ENCODE measurements at regions of chr22 and their contacts with region 1.

Region 1: DNA sequence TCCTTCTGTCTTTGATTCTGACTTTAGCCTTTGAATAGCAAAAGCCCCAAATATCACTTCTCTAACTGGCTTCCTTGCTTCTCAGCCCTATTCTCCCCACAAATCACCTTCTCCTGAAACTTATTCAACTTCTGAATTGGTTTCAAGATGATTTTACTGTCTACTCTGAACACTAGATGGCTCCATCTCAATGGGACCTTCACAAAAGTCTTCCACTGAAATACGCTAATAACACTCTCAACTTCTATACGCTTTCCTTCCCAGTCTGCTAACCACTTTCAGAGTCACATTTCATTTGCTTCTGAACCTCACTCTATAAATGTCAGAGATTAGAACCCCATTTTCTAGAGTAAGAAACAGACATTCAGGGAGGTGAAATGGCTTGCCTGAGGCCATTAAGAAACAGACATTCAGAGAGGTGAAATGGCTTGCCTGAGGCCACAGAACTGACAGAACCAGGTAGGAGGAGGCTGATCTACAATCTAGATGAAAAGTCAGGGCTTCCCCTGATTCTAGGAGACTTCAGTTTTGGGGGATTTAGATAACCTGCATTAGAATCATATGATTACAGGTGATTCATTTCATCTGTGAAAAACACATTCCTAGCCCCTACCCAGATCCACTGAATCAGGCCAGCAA is 20.6 kb downstream of the MORC2 start:
- DNase-seq: no peak
- H3K4me3 ChIP-seq: no peak overlapping the region
- H3K27ac ChIP-seq: peak overlapping the region; percentile 50 to 62
- H3K4me1 ChIP-seq: no peaks in the 10 kb centered on the region
- H3K27me3 ChIP-seq: no peaks in the 10 kb centered on the region
- CTCF ChIP-seq: peak in 3 of 4 experiments; percentile 49 to 79 (median 72)
- POLR2A ChIP-seq: no peak

Region 2: DNA sequence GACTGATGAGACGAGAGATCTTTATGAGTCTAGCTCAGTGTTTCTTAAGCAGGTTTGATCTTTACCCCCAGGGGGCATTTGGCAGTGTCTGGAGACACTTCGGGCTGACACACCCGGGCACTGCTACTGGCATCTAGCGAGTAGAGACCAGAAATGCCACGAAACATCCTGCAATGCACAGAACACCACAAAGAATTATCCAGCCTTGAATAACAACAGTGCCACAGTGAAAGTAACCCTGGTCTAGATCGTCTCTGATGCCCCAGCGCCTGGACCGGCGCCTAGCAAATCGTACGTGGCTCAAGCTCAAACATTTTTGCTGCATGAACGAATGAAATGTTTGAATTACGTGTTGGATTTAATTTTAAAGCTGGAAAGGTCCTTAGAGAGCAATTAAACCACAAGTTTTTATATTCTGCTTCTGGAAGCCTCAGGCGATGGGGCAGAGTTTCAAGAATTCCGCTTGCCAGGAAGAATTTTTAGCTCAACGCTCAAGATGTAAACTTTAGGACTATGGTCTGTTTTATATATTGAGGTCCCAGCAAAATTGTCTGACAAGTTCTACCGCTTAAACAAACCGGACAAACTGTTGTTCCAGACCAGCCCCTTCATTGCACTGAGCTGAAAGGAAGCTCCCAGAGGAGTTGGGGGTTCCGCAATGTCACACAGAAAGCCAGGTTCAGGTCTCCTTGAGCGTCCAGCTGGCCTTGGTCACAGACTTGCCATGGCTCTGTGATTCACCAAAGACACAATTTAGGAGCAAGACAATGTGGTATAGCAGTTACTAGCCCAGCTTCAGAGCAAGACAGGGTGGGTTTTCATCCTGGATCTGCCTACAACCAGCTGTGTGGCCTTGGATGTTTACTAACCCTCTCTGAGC is 89.0 kb after region 1 on chr22:
- intact Hi-C with region 1: loop called (anchors 10 kb)
- DNase-seq: no peak
- H3K4me3 ChIP-seq: peak overlapping the region in 1 of 2 donors; percentile 8
- H3K27ac ChIP-seq: peak overlapping the region; percentile 48 to 54
- H3K4me1 ChIP-seq: peaks cover 6% of the 10 kb centered on the region
- H3K27me3 ChIP-seq: no peaks in the 10 kb centered on the region
- CTCF ChIP-seq: no peak
- POLR2A ChIP-seq: no peak

Region 3: GRCh38 chr22:31080848-31081649 is 133.1 kb after region 1 on chr22 and contains the start of gene SMTN:
- intact Hi-C with region 1: loop called (anchors 2 kb)
- DNase-seq: peak; percentile 94
- H3K4me3 ChIP-seq: peak within 1 kb of the TSS; percentile 61 to 69
- H3K27ac ChIP-seq: peak within 1 kb of the TSS; percentile 90
- H3K4me1 ChIP-seq: peaks cover 11% of the 10 kb centered on the region
- H3K27me3 ChIP-seq: no peaks in the 10 kb centered on the region
- CTCF ChIP-seq: peak in 2 of 4 experiments; percentile 20 to 26
- POLR2A ChIP-seq: peak; percentile 100
- total RNA-seq, gene SMTN: 200 to 209 TPM

Region 4: GRCh38 chr22:31148953-31149627 is 201.2 kb after region 1 on chr22:
- intact Hi-C with region 1: loop called (anchors 5 kb)
- DNase-seq: peak; percentile 78
- H3K4me3 ChIP-seq: no peak overlapping the region
- H3K27ac ChIP-seq: peak overlapping the region; percentile 43 to 54
- H3K4me1 ChIP-seq: no peaks in the 10 kb centered on the region
- H3K27me3 ChIP-seq: no peaks in the 10 kb centered on the region
- CTCF ChIP-seq: peak; percentile 68 to 96 (median 87)
- POLR2A ChIP-seq: no peak

Region 5: DNA sequence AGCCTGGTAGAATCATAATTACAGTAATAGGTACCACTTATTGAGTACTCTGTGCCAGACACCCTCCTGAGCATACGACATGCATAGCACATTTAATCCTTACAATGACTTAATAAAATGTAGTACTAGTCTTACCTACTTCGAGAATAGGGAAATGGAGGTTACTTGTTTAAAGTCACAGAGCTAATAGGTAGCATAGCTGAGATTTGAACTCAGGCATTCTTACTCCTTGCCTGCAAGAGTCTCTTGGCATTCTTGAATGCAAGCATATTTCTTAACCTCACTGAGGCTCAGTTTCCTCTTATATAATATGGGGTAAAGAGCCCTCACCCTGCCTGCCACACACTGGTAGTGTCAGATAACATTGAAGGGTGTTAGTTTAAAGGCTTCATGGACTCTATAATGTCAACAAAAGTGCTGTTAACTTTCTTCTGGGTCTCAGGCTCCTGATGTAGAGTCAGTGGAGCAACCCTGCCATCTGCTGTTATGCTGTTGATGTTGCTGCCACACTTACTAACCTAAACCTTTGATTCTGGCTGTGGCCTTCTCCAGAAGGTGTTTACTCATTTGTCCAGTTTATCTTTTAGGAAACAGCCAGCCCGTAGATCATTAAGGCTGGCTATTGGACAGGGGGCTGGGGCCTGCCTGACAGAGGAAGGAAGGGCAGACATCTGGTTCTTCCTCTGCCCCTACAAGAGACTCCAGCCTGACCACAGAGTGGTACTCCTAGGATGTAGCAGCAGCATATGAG is 283.1 kb after region 1 on chr22:
- intact Hi-C with region 1: loop called (anchors 10 kb)
- DNase-seq: peak; percentile 74
- H3K4me3 ChIP-seq: no peak overlapping the region
- H3K27ac ChIP-seq: peak overlapping the region; percentile 63 to 67
- H3K4me1 ChIP-seq: peaks cover 6% of the 10 kb centered on the region
- H3K27me3 ChIP-seq: no peaks in the 10 kb centered on the region
- CTCF ChIP-seq: peak in 3 of 4 experiments; percentile 76 to 95 (median 90)
- POLR2A ChIP-seq: no peak

Measured in prostate gland (tissue), 2 donors.